Heart left ventricle (tissue), 16 donors: ENCODE measurements at regions of chr15 and their contacts with region 1.

Region 1: DNA sequence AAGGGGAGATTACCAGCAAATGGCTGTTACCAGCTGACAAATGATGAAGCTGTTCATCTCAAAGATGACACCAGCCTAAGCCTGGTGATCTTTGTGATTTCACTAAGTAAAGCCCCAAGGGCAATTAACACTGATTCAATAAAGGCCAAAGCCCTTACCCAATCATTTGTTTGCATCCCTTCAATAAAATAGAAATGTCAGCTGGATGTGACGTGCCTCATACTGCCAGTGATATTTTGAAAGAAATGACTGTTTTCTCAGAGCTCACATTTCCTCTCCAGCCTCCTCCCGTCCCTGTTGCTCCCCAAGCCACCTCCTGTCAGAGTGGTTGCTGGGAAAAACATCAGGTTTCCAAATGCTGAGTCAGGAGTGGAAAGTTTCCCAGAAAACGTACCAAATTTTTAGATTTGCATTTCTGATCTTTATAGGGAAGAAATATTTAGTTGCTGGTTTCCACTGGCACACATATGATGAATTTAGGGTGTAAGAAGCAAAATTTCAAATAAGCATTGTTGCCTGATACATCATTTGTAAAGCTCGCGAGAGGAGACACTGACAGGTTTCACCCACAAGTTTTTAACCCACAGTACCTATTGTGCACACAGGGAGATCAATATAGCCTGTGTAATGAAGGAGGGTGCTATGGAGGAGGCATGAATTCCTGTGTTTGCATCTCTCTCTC is 21.0 kb downstream of the C2CD4A start:
- DNase-seq: no peak
- ATAC-seq: peak in 3 of 4 donors; percentile 48 to 68 (median 59)
- H3K4me3 ChIP-seq: no peak overlapping the region
- H3K27ac ChIP-seq: peak overlapping the region in 2 of 12 donors; percentile 1 to 30
- H3K4me1 ChIP-seq: peaks cover 0 to 10% (median 3%) of the 10 kb centered on the region in 12 donors
- H3K27me3 ChIP-seq: no peaks in the 10 kb centered on the region
- CTCF ChIP-seq: no peak
- POLR2A ChIP-seq: no peak

Region 2: GRCh38 chr15:61916104-61916503 is 171.7 kb before region 1 on chr15:
- intact Hi-C with region 1: no loop called
- DNase-seq: peak in 1 of 5 donors; percentile 19
- ATAC-seq: peak; percentile 66 to 90 (median 72)
- H3K4me3 ChIP-seq: no peak overlapping the region
- H3K27ac ChIP-seq: peak overlapping the region in 5 of 12 donors; percentile 18 to 45 (median 40)
- H3K4me1 ChIP-seq: peaks cover 0 to 7% (median 0%) of the 10 kb centered on the region in 12 donors
- H3K27me3 ChIP-seq: no peaks in the 10 kb centered on the region
- CTCF ChIP-seq: no peak
- POLR2A ChIP-seq: no peak

Region 3: GRCh38 chr15:62021991-62022600 is 65.7 kb before region 1 on chr15:
- intact Hi-C with region 1: loop called in 1 of 10 experiments (anchors 10 kb)
- DNase-seq: no peak
- ATAC-seq: no peak
- H3K4me3 ChIP-seq: no peak overlapping the region
- H3K27ac ChIP-seq: no peak overlapping the region
- H3K4me1 ChIP-seq: peaks cover 0 to 10% (median 0%) of the 10 kb centered on the region in 12 donors
- H3K27me3 ChIP-seq: no peaks in the 10 kb centered on the region
- CTCF ChIP-seq: peak in 4 of 12 donors; percentile 14 to 22 (median 18)
- POLR2A ChIP-seq: no peak

Region 4: DNA sequence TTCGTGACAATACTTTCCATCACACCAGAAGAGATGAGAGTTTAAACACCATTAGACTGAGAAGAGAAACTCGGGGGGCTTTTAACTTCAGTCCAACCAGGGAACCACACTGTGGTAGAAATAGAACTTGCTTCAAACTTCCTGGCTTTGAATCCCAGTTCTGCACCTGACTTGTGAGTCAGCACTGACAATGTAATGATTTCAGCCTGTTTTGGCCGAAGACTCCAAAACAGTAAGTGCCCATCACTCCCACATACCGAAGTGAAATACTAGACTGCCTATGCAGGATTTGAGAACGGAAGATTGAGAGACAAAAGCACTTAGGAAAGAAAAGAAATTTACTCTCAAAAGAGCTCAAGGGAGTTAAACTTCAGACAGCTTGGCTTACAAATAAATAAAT is 50.3 kb after region 1 on chr15:
- intact Hi-C with region 1: no loop called
- DNase-seq: no peak
- ATAC-seq: peak in 1 of 4 donors; percentile 16
- H3K4me3 ChIP-seq: no peak overlapping the region
- H3K27ac ChIP-seq: no peak overlapping the region
- H3K4me1 ChIP-seq: peaks cover 0 to 6% (median 0%) of the 10 kb centered on the region in 12 donors
- H3K27me3 ChIP-seq: no peaks in the 10 kb centered on the region
- CTCF ChIP-seq: no peak
- POLR2A ChIP-seq: no peak